Gastrocnemius medialis (tissue), 4 donors: ENCODE measurements at regions of chr1 and their contacts with region 1.

Region 1: GRCh38 chr1:222455188-222455879 is 92.6 kb downstream of the HHIPL2 start:
- DNase-seq: peak; percentile 66 to 76
- ATAC-seq: peak; percentile 95 to 97
- H3K4me3 ChIP-seq: peak overlapping the region; percentile 23 to 40 (median 36)
- H3K27ac ChIP-seq: peak overlapping the region; percentile 58 to 76 (median 68)
- H3K4me1 ChIP-seq: peaks cover 18 to 23% of the 10 kb centered on the region in 2 donors
- H3K27me3 ChIP-seq: no peaks in the 10 kb centered on the region
- CTCF ChIP-seq: peak; percentile 77 to 94 (median 88)
- POLR2A ChIP-seq: no peak

Region 2: GRCh38 chr1:221263831-221264767 is 1191.2 kb before region 1 on chr1:
- in situ Hi-C with region 1: loop called in 1 of 4 experiments (anchors 10 kb)
- intact Hi-C with region 1: loop called (anchors 2 kb)
- DNase-seq: peak; percentile 18 to 34
- ATAC-seq: peak; percentile 73 to 80
- H3K4me3 ChIP-seq: no peak overlapping the region
- H3K27ac ChIP-seq: peak overlapping the region; percentile 30 to 62 (median 45)
- H3K4me1 ChIP-seq: peaks cover 4 to 10% of the 10 kb centered on the region in 2 donors
- H3K27me3 ChIP-seq: no peaks in the 10 kb centered on the region
- CTCF ChIP-seq: peak; percentile 12 to 58 (median 52)
- POLR2A ChIP-seq: no peak

Region 3: GRCh38 chr1:221543529-221544120 is 911.7 kb before region 1 on chr1:
- in situ Hi-C with region 1: no loop called
- intact Hi-C with region 1: loop called (anchors 10 kb)
- DNase-seq: no peak
- ATAC-seq: no peak
- H3K4me3 ChIP-seq: no peak overlapping the region
- H3K27ac ChIP-seq: no peak overlapping the region
- H3K4me1 ChIP-seq: no peaks in the 10 kb centered on the region
- H3K27me3 ChIP-seq: no peaks in the 10 kb centered on the region
- CTCF ChIP-seq: peak in 4 of 5 experiments; percentile 32 to 57 (median 52)
- POLR2A ChIP-seq: no peak

Region 4: DNA sequence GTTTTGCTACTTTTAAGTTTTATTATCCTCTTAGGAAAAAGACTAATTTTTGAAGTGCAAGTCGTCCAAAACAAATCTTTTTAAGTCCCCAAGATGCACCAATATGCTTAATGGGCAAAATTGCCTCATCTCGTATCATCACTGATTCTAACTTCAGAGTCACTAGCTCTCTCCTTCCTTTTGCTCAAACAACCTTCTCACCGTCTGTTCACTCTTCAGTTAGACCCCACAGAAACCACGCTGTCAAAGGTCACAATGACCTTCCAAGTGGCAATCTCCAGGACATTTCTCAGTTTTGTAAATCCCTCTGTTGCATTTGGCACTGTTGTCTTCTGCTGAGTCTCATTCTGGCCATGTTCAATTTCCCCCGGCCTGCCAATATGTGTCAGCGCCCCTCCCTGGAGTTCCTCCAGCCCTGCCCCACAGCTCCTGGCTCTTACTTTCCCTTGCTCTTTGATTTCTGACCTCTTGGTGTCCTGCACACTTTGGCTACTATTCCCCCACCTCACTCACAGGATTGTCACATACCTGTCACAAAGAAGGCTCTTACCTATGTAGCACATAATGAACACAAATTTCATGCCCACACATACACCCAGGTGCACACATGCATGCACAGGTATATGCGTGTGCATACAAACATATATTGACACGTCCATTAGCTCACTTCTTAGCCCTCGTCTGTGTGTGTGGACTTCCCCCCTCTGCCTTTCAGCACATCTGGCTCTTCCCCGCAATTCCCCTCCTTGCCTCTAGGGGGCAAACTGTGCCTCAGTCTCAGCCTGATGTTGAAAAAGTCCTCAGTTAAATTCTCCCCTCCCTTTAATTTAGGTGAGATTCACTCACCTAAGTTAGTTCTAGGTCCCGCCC is 359.5 kb before region 1 on chr1:
- in situ Hi-C with region 1: no loop called
- intact Hi-C with region 1: loop called (anchors 5 kb)
- DNase-seq: no peak
- ATAC-seq: no peak
- H3K4me3 ChIP-seq: no peak overlapping the region
- H3K27ac ChIP-seq: no peak overlapping the region
- H3K4me1 ChIP-seq: no peaks in the 10 kb centered on the region
- H3K27me3 ChIP-seq: no peaks in the 10 kb centered on the region
- CTCF ChIP-seq: peak in 4 of 5 experiments; percentile 32 to 58 (median 50)
- POLR2A ChIP-seq: no peak

Region 5: DNA sequence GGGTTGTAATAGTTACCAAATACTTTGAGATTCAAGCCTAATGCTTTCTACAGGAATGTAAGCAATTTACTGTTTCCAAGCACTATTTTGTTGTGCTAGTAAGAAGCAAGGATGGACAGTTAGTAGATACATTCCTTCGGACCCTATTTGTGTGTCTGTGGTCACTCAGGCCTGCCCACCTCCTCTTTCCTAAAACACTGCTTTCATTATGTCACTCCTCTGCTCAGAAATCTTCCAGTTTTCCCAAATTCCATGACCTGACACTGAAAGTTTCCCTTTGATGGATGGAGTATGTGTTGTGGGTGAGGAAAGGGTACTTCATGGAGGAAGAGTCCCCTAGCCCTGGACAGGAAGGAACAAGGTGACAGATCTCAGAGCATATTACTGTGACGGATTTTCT is 500.6 kb after region 1 on chr1:
- in situ Hi-C with region 1: no loop called
- intact Hi-C with region 1: no loop called
- DNase-seq: no peak
- ATAC-seq: no peak
- H3K4me3 ChIP-seq: no peak overlapping the region
- H3K27ac ChIP-seq: no peak overlapping the region
- H3K4me1 ChIP-seq: no peaks in the 10 kb centered on the region
- H3K27me3 ChIP-seq: no peaks in the 10 kb centered on the region
- CTCF ChIP-seq: no peak
- POLR2A ChIP-seq: no peak